ENCODE measurements at regions of chr1 and their contacts with region 1.

Region 1: DNA sequence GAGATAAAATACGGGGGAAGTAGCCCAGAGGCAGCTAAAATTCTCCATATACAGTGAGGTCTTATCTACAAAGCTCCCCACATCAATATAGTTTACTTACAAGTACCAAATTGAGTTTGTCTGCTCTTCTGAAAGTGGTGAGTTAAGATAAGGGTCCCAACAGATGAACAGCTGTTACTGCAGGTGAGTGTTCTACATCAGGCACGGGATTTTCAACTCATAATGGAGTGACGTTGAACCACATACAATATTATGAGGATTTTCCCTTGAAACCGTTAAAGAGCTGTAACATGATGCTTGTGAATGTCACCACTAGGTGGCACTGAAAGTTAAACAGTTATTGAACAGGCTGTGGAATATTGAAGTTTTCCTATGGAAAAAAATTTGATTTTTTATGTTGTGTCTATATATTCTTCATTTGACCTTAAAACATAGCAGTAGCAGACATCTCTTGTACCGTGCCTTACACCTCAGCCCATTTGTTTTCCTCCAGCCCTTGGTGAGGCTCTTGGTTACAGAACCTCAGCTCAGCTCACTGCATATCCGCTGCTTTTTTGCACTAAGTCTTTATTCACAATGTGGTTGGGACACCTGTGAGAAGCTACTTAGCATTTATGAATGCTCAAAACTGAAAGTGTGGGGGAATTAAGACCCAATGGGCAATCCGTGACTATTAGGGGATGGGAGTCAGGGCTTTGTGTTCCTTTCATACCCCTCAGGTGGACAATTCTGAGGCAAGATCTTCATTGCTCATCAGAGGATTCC is 23.2 kb downstream of the CD1D start:
- DNase-seq: peak; percentile 75
- ATAC-seq: peak; percentile 75
- H3K4me3 ChIP-seq: peak overlapping the region in 4 of 5 experiments; percentile 16 to 42 (median 30)
- H3K4me3 Mint-ChIP-seq: peak overlapping the region; percentile 74
- H3K27ac ChIP-seq: peak overlapping the region; percentile 4 to 72
- H3K27ac Mint-ChIP-seq: peak overlapping the region; percentile 70
- H3K4me1 ChIP-seq: peaks cover 11 to 14% of the 10 kb centered on the region in 2 donors
- H3K4me1 Mint-ChIP-seq: peaks cover 22% of the 10 kb centered on the region
- H3K27me3 ChIP-seq: no peaks in the 10 kb centered on the region
- H3K27me3 Mint-ChIP-seq: no peaks in the 10 kb centered on the region
- CTCF ChIP-seq: peak; percentile 95

Region 2: GRCh38 chr1:158045639-158046038 is 158.2 kb before region 1 on chr1:
- CTCF ChIA-PET with region 1: no interaction called
- POLR2A ChIA-PET with region 1: no interaction called
- intact Hi-C with region 1: no loop called
- DNase-seq: no peak
- ATAC-seq: no peak
- H3K4me3 ChIP-seq: no peak overlapping the region
- H3K4me3 Mint-ChIP-seq: no peak overlapping the region
- H3K27ac ChIP-seq: no peak overlapping the region
- H3K27ac Mint-ChIP-seq: no peak overlapping the region
- H3K4me1 ChIP-seq: no peaks in the 10 kb centered on the region
- H3K4me1 Mint-ChIP-seq: no peaks in the 10 kb centered on the region
- H3K27me3 ChIP-seq: peaks cover 0 to 16% (median 2%) of the 10 kb centered on the region in 4 experiments
- H3K27me3 Mint-ChIP-seq: peaks cover 32% of the 10 kb centered on the region
- CTCF ChIP-seq: no peak

Region 3: DNA sequence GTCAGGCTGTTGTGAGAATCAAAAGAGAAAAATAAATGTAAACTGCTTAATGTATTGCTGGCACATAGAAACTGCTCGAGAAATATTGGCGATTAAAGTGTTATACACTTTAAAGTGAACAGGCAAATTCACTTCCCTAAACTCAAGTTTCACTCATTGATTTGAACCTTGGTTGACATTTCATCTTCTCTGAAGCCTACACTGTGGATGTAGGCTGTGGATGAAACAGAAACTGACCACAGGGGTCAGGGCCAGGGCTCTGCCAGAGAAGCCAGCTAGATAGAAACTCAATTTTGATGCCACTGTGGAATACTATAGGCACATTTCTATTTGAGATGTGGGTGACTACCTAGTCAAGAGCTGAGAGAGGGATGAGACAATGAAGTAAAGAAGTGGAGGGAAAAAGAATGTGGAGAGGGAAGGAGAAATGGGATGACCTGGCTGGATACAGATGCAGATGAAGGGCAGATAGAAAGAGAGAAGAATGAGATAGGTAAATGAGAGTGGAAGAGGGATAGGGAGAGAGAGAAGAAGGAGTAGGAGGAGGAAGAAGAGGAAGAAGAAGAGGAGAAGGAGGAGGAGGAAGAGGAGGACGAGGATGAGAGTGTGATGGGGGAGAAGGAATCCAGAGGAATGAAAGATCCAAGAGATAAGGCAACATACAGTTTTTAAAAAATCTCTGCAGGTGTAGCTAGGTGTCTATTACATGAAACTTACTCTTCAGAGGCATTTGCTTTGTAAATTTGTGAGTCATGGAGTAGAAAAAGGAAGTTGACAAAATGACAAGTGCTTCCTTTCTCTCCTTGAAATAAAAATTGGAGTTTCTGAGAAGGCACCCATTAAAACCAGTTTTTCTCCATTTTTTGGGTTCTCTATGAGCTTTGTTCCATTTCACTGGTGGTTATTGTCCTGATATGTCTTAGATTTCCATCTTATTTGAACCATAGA is 40.6 kb before region 1 on chr1:
- CTCF ChIA-PET with region 1: interaction called, 15 read pairs
- POLR2A ChIA-PET with region 1: no interaction called
- intact Hi-C with region 1: no loop called
- DNase-seq: peak; percentile 42
- ATAC-seq: peak; percentile 92
- H3K4me3 ChIP-seq: peak overlapping the region in 2 of 5 experiments; percentile 3 to 32
- H3K4me3 Mint-ChIP-seq: peak overlapping the region; percentile 78
- H3K27ac ChIP-seq: peak overlapping the region in 1 of 2 donors; percentile 21
- H3K27ac Mint-ChIP-seq: peak overlapping the region; percentile 68
- H3K4me1 ChIP-seq: peaks cover 33 to 40% of the 10 kb centered on the region in 2 donors
- H3K4me1 Mint-ChIP-seq: peaks cover 35% of the 10 kb centered on the region
- H3K27me3 ChIP-seq: no peaks in the 10 kb centered on the region
- H3K27me3 Mint-ChIP-seq: no peaks in the 10 kb centered on the region
- CTCF ChIP-seq: peak; percentile 23

Region 4: DNA sequence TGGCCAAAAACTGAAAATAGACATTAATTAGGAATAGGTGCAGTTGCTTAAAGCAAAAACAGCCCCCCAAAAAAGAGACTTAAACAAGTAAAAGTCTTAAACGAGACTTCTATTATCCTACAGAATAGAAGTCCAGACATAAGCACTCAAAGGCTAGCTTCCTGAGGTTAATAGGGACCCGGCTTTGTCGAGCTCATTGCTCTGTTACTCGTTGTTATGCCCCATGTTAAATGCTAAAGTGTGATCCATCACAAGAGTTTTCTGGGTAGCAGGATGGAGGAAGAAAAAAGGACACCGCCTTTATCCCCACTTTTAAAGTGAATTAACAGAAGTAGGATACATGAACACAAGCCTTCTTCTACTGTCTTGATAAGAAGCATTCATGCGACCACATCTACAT is 12.6 kb before region 1 on chr1:
- CTCF ChIA-PET with region 1: interaction called, 44 read pairs
- POLR2A ChIA-PET with region 1: no interaction called
- intact Hi-C with region 1: no loop called
- DNase-seq: no peak
- ATAC-seq: no peak
- H3K4me3 ChIP-seq: no peak overlapping the region
- H3K4me3 Mint-ChIP-seq: no peak overlapping the region
- H3K27ac ChIP-seq: no peak overlapping the region
- H3K27ac Mint-ChIP-seq: no peak overlapping the region
- H3K4me1 ChIP-seq: peaks cover 0 to 3% of the 10 kb centered on the region in 2 donors
- H3K4me1 Mint-ChIP-seq: peaks cover 15% of the 10 kb centered on the region
- H3K27me3 ChIP-seq: no peaks in the 10 kb centered on the region
- H3K27me3 Mint-ChIP-seq: no peaks in the 10 kb centered on the region
- CTCF ChIP-seq: no peak

Region 5: DNA sequence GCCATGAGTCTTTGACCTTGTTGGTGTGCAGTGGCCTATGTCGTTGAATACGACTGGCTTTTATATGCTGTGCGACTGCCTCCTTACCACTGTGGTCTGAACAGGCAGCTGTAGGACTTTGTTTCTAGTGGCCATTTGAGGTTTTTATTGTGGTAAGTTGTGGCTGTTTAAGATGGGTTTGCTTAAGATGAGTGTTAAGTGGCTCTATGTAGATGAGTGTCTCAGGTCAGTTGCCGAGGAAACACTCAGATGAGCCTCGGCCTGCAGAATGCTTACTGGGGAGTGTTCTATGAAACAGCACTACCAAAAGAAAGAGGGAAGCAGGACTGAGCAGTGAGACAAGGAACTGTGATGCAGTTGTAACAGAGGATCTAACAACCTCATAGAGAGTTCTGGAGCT is 70.9 kb after region 1 on chr1:
- CTCF ChIA-PET with region 1: interaction called, 12 read pairs
- POLR2A ChIA-PET with region 1: no interaction called
- intact Hi-C with region 1: no loop called
- DNase-seq: peak; percentile 37
- ATAC-seq: peak; percentile 68
- H3K4me3 ChIP-seq: no peak overlapping the region
- H3K4me3 Mint-ChIP-seq: peak overlapping the region; percentile 70
- H3K27ac ChIP-seq: peak overlapping the region in 1 of 2 donors; percentile 47
- H3K27ac Mint-ChIP-seq: peak overlapping the region; percentile 91
- H3K4me1 ChIP-seq: peaks cover 23 to 35% of the 10 kb centered on the region in 2 donors
- H3K4me1 Mint-ChIP-seq: peaks cover 39% of the 10 kb centered on the region
- H3K27me3 ChIP-seq: no peaks in the 10 kb centered on the region
- H3K27me3 Mint-ChIP-seq: no peaks in the 10 kb centered on the region
- CTCF ChIP-seq: no peak

Region 6: GRCh38 chr1:158496374-158496773 is 292.5 kb after region 1 on chr1:
- CTCF ChIA-PET with region 1: interaction called, 37 read pairs
- POLR2A ChIA-PET with region 1: no interaction called
- intact Hi-C with region 1: loop called (anchors 2 kb)
- DNase-seq: peak; percentile 46
- ATAC-seq: no peak
- H3K4me3 ChIP-seq: no peak overlapping the region
- H3K4me3 Mint-ChIP-seq: no peak overlapping the region
- H3K27ac ChIP-seq: no peak overlapping the region
- H3K27ac Mint-ChIP-seq: no peak overlapping the region
- H3K4me1 ChIP-seq: no peaks in the 10 kb centered on the region
- H3K4me1 Mint-ChIP-seq: peaks cover 2% of the 10 kb centered on the region
- H3K27me3 ChIP-seq: peaks cover 0 to 5% (median 0%) of the 10 kb centered on the region in 4 experiments
- H3K27me3 Mint-ChIP-seq: peaks cover 11% of the 10 kb centered on the region
- CTCF ChIP-seq: peak; percentile 35

Region 7: GRCh38 chr1:159089184-159089791 is 885.4 kb after region 1 on chr1:
- CTCF ChIA-PET with region 1: interaction called, 12 read pairs
- POLR2A ChIA-PET with region 1: no interaction called
- intact Hi-C with region 1: no loop called
- DNase-seq: peak; percentile 60
- ATAC-seq: peak; percentile 48
- H3K4me3 ChIP-seq: no peak overlapping the region
- H3K4me3 Mint-ChIP-seq: no peak overlapping the region
- H3K27ac ChIP-seq: no peak overlapping the region
- H3K27ac Mint-ChIP-seq: peak overlapping the region; percentile 57
- H3K4me1 ChIP-seq: peaks cover 16% of the 10 kb centered on the region in 2 donors
- H3K4me1 Mint-ChIP-seq: peaks cover 23% of the 10 kb centered on the region
- H3K27me3 ChIP-seq: no peaks in the 10 kb centered on the region
- H3K27me3 Mint-ChIP-seq: no peaks in the 10 kb centered on the region
- CTCF ChIP-seq: peak; percentile 79